ENCODE measurements at regions of chr2 and their contacts with region 1.

Region 1: DNA sequence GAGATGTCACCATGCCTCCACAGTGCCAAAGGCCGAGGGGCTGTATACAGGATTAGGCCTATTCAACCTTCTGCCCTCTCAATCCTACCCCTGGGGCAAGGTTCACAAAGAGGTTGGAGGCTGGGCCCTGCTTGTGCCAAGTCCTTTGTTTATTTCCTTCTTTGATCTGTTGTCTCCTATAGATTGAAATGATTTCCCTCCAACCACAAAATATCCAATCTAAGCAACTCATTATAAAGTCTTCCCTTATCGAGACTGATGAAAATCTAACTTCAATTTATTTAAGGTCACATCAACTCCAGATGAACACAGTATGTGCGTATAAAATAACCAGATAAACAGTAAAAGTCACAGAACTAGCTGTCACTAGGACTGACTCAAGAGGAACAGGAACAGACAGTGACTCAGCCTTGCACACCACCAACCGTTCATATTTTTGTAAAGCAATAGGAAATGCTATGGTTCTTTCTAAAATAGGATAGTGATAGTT is 95.7 kb downstream of the SLC25A12 start:
- DNase-seq: no peak
- H3K4me3 Mint-ChIP-seq: no peak overlapping the region
- H3K27ac Mint-ChIP-seq: peak overlapping the region; percentile 68
- H3K4me1 Mint-ChIP-seq: peaks cover 23% of the 10 kb centered on the region
- H3K27me3 Mint-ChIP-seq: no peaks in the 10 kb centered on the region

Region 2: DNA sequence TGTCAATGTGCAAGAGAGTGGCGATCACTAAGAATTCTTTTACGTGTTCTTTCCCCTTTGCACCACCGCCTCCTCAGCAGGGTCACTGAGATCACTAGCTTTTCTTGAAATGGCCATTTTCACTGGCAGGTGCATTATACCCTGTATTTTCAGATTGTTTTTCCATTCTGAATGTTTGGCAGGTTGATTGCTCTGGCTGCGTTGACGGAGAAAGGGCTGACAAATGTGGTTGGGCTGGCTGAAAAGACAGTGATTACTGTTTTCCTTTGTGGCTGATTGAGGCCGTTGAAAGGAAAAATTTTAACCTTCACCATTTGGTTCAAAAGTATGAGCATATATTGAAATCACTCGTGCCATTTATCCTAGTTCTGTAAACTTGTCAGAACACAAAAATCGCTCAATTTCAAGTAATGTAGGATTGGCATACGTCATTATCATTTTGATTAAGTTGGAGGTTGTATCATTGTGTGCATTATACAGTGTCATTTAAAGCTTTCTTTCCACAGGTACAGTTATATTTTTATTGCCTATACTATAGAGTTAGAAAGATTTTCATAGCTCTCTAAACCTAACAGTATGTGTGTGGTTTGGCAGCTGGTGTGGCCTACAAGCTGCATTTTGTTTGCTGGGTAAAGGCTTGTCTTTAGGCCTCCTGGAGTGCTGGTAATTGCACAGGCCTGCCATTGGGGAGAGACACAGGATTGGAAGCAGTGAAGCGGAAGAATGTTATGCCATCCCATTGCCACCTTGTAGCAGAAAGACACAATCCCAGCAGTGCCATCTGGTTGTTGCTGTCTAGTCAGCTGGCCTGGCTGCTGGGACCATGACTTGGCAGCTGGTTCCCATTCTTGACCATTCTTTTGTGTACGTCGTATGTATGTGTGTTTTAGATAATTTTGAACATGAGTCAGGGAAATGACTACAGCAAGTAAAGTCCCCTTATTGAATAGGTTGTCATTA is 74.3 kb before region 1 on chr2:
- intact Hi-C with region 1: loop called (anchors 10 kb)
- DNase-seq: no peak
- H3K4me3 Mint-ChIP-seq: no peak overlapping the region
- H3K27ac Mint-ChIP-seq: no peak overlapping the region
- H3K4me1 Mint-ChIP-seq: peaks cover 2% of the 10 kb centered on the region
- H3K27me3 Mint-ChIP-seq: no peaks in the 10 kb centered on the region

Measured in activated T-helper 2 cell treated with anti-CD3 and anti-CD28 coated beads, Interferon-gamma antibody, Interleukin-2, Interleukin-4, amounts not matched to agents 10 μg/mL and 5 μg/mL and 100 μg/mL, durations not matched to agents 14 hours and 24 hours and 36 hours (primary cell).